Transverse colon (tissue), 4 donors: ENCODE measurements at regions of chr14 and their contacts with region 1.

Region 1: DNA sequence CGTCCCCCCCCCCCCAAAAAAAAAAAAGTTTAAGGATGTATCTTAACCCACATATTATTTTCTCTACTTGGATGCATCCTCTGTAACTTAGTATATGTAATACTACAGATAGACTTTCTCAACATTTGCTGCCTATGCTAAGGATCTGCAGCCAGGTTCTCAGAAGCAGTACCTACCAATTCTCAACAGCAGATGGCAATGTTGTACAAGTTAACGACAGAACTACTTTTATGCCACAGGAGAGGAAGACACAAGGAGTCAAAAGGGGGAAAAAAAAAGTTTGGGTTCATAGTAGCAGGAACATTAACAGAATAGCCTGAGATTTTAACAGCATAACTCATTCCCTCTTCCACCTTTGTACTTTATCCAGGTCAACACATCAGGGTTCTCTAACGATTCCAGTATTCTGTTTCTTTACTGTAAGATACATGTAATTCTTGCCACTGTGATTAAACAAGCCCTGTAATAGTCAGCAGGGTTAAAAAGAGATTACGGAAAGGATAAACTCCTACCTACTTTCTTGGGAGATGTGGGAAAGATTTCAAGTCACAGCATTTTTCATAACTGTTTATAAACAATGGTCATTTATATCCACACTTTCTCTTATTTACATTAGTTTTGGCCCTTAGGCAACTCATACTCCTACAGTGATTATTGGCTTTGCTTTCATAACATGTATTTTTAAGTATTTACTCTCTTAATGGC is 5.7 kb upstream of the NEK9 start:
- DNase-seq: peak; percentile 42
- H3K4me3 ChIP-seq: no peak overlapping the region
- H3K27ac ChIP-seq: peak overlapping the region; percentile 26 to 69 (median 51)
- H3K4me1 ChIP-seq: peaks cover 11 to 29% (median 15%) of the 10 kb centered on the region in 4 donors
- H3K27me3 ChIP-seq: no peaks in the 10 kb centered on the region
- CTCF ChIP-seq: peak; percentile 64 to 92 (median 73)
- EP300 ChIP-seq: no peak
- POLR2A ChIP-seq: no peak

Region 2: GRCh38 chr14:74737753-74738325 is 394.7 kb before region 1 on chr14:
- in situ Hi-C with region 1: no loop called
- intact Hi-C with region 1: no loop called
- DNase-seq: no peak
- H3K4me3 ChIP-seq: no peak overlapping the region
- H3K27ac ChIP-seq: no peak overlapping the region
- H3K4me1 ChIP-seq: no peaks in the 10 kb centered on the region
- H3K27me3 ChIP-seq: no peaks in the 10 kb centered on the region
- CTCF ChIP-seq: no peak
- EP300 ChIP-seq: no peak
- POLR2A ChIP-seq: no peak

Region 3: GRCh38 chr14:75063407-75064213 is 68.9 kb before region 1 on chr14 and contains the start of gene ACYP1:
- in situ Hi-C with region 1: no loop called
- intact Hi-C with region 1: no loop called
- DNase-seq: peak; percentile 96
- H3K4me3 ChIP-seq: peak within 1 kb of the TSS; percentile 74 to 96 (median 85)
- H3K27ac ChIP-seq: peak within 1 kb of the TSS; percentile 79 to 89 (median 86)
- H3K4me1 ChIP-seq: peaks cover 6 to 30% (median 18%) of the 10 kb centered on the region in 4 donors
- H3K27me3 ChIP-seq: no peaks in the 10 kb centered on the region
- CTCF ChIP-seq: peak in 1 of 5 experiments; percentile 8
- EP300 ChIP-seq: no peak
- POLR2A ChIP-seq: peak; percentile 57
- total RNA-seq, gene ACYP1: 6.6 to 36.0 (median 23.2) TPM

Region 4: GRCh38 chr14:75295491-75296345 is 163.2 kb after region 1 on chr14:
- in situ Hi-C with region 1: loop called (anchors 5 to 10 kb)
- intact Hi-C with region 1: loop called (anchors 2 kb)
- DNase-seq: peak; percentile 89
- H3K4me3 ChIP-seq: peak overlapping the region; percentile 6 to 67 (median 46)
- H3K27ac ChIP-seq: peak overlapping the region; percentile 91 to 98 (median 92)
- H3K4me1 ChIP-seq: peaks cover 18 to 38% (median 26%) of the 10 kb centered on the region in 4 donors
- H3K27me3 ChIP-seq: no peaks in the 10 kb centered on the region
- CTCF ChIP-seq: peak; percentile 97 to 100 (median 98)
- EP300 ChIP-seq: no peak
- POLR2A ChIP-seq: peak; percentile 36

Region 5: GRCh38 chr14:75479770-75480600 is 347.5 kb after region 1 on chr14:
- in situ Hi-C with region 1: loop called in 3 of 4 experiments (anchors 5 to 25 kb)
- intact Hi-C with region 1: loop called (anchors 5 kb)
- DNase-seq: no peak
- H3K4me3 ChIP-seq: no peak overlapping the region
- H3K27ac ChIP-seq: no peak overlapping the region
- H3K4me1 ChIP-seq: peaks cover 0 to 10% (median 8%) of the 10 kb centered on the region in 4 donors
- H3K27me3 ChIP-seq: no peaks in the 10 kb centered on the region
- CTCF ChIP-seq: no peak
- EP300 ChIP-seq: no peak
- POLR2A ChIP-seq: no peak

Region 6: GRCh38 chr14:75487155-75487671 is 354.7 kb after region 1 on chr14:
- in situ Hi-C with region 1: loop called in 3 of 4 experiments (anchors 5 to 25 kb)
- intact Hi-C with region 1: loop called (anchors 5 kb)
- DNase-seq: no peak
- H3K4me3 ChIP-seq: no peak overlapping the region
- H3K27ac ChIP-seq: no peak overlapping the region
- H3K4me1 ChIP-seq: no peaks in the 10 kb centered on the region
- H3K27me3 ChIP-seq: no peaks in the 10 kb centered on the region
- CTCF ChIP-seq: no peak
- EP300 ChIP-seq: no peak
- POLR2A ChIP-seq: no peak